ENCODE measurements at regions of chr10 and their contacts with region 1.

Region 1: GRCh38 chr10:73810735-73811465 is 498 bp downstream of the NDST2 start:
- H3K4me3 Mint-ChIP-seq: peak overlapping the region; percentile 84
- H3K27ac Mint-ChIP-seq: peak overlapping the region; percentile 85
- H3K4me1 Mint-ChIP-seq: peaks cover 74% of the 10 kb centered on the region
- H3K27me3 Mint-ChIP-seq: no peaks in the 10 kb centered on the region

Region 2: GRCh38 chr10:73076360-73077183 is 734.3 kb before region 1 on chr10:
- intact Hi-C with region 1: no loop called
- H3K4me3 Mint-ChIP-seq: peak overlapping the region; percentile 30
- H3K27ac Mint-ChIP-seq: peak overlapping the region; percentile 82
- H3K4me1 Mint-ChIP-seq: peaks cover 8% of the 10 kb centered on the region
- H3K27me3 Mint-ChIP-seq: no peaks in the 10 kb centered on the region

Region 3: DNA sequence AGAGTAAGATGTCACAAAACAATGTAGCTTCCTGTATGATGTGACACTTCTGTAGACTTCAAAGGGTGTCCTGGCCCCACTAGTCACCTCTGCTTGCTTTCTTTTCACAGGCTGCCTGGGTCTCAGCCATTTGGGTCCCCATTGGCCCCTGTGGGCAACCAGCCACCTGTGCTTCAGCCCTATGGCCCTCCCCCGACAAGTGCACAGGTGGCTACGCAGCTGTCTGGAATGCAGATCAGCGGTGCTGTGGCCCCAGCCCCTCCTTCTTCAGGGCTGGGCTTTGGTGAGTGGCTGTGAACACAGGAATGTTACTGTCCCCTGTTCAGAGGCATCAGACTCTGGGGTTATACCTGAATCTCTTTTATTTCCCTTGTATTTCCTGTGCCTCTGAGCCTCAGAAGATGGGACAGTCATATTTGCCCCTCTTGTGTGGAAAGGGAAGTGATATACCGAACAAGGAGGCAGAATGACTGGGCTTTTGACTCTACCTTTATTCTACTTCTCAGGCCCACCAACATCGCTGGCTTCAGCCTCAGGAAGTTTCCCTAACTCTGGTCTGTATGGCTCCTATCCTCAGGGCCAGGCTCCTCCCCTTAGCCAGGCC is 51.3 kb before region 1 on chr10:
- intact Hi-C with region 1: no loop called
- H3K4me3 Mint-ChIP-seq: no peak overlapping the region
- H3K27ac Mint-ChIP-seq: no peak overlapping the region
- H3K4me1 Mint-ChIP-seq: peaks cover 25% of the 10 kb centered on the region
- H3K27me3 Mint-ChIP-seq: no peaks in the 10 kb centered on the region

Region 4: GRCh38 chr10:73772280-73773151 is 38.4 kb before region 1 on chr10:
- intact Hi-C with region 1: loop called (anchors 2 kb)
- H3K4me3 Mint-ChIP-seq: peak overlapping the region; percentile 89
- H3K27ac Mint-ChIP-seq: peak overlapping the region; percentile 88
- H3K4me1 Mint-ChIP-seq: peaks cover 51% of the 10 kb centered on the region
- H3K27me3 Mint-ChIP-seq: no peaks in the 10 kb centered on the region